ENCODE measurements at regions of chr1 and their contacts with region 1.

Region 1: DNA sequence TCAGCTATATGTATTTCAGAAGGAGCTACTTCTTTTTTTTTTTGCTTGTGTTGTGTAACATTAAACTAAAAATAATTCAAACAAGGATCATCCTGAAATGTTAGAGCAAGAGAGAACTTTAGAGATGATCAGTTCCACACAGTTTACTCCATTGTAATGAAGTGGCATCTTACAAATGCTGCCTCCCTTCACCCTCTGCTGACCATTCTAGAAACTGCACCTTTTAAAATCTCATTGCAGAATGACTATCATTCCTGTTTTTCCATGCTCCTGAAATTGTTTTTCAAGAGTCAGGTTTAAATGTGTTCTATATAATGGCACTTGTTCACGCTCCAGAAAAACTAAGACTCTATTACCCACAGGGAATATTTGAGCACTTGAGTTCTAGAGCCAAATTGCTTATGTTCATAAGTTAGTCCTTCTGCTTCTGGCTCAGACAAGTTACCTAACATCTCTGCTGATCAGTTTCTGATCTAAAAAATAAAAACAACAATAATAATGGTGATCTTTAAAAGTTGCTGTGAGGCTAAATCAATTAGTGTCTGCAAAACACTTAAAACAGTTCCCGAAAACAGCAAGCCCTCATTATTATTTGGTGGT is 21.5 kb upstream of the SLC44A5 start:
- DNase-seq: no peak
- ATAC-seq: peak; percentile 79
- H3K4me3 ChIP-seq: no peak overlapping the region
- H3K27ac ChIP-seq: no peak overlapping the region
- H3K4me1 ChIP-seq: no peaks in the 10 kb centered on the region
- H3K27me3 ChIP-seq: no peaks in the 10 kb centered on the region
- CTCF ChIP-seq: peak; percentile 65 to 69 (median 66); a peak in 5 of 6 replicates
- EP300 ChIP-seq: no peak
- POLR2A ChIP-seq: no peak
- RAD21 ChIP-seq: peak; percentile 86

Region 2: GRCh38 chr1:75233302-75233929 is 399.0 kb before region 1 on chr1:
- CTCF ChIA-PET with region 1: interaction called, 25 read pairs
- POLR2A ChIA-PET with region 1: no interaction called
- RAD21 ChIA-PET with region 1: interaction called, 6 read pairs
- SMC1A ChIA-PET with region 1: interaction called, 7 read pairs
- in situ Hi-C with region 1: loop called (anchors 10 kb)
- intact Hi-C with region 1: loop called (anchors 1 kb)
- DNase-seq: peak; percentile 4
- ATAC-seq: peak; percentile 93
- H3K4me3 ChIP-seq: no peak overlapping the region
- H3K27ac ChIP-seq: no peak overlapping the region
- H3K4me1 ChIP-seq: no peaks in the 10 kb centered on the region
- H3K27me3 ChIP-seq: no peaks in the 10 kb centered on the region
- CTCF ChIP-seq: peak; percentile 63 to 68 (median 64)
- EP300 ChIP-seq: no peak
- POLR2A ChIP-seq: no peak
- RAD21 ChIP-seq: peak; percentile 85

Region 3: GRCh38 chr1:75265792-75266191 is 366.7 kb before region 1 on chr1:
- CTCF ChIA-PET with region 1: interaction called, 71 read pairs
- POLR2A ChIA-PET with region 1: no interaction called
- RAD21 ChIA-PET with region 1: interaction called, 6 read pairs
- SMC1A ChIA-PET with region 1: interaction called, 14 read pairs
- in situ Hi-C with region 1: loop called (anchors 10 kb)
- intact Hi-C with region 1: loop called (anchors 1 kb)
- DNase-seq: peak; percentile 12
- ATAC-seq: peak; percentile 68
- H3K4me3 ChIP-seq: no peak overlapping the region
- H3K27ac ChIP-seq: no peak overlapping the region
- H3K4me1 ChIP-seq: no peaks in the 10 kb centered on the region
- H3K27me3 ChIP-seq: no peaks in the 10 kb centered on the region
- CTCF ChIP-seq: peak; percentile 56 to 65 (median 65)
- EP300 ChIP-seq: no peak
- POLR2A ChIP-seq: no peak
- RAD21 ChIP-seq: peak; percentile 75

Region 4: DNA sequence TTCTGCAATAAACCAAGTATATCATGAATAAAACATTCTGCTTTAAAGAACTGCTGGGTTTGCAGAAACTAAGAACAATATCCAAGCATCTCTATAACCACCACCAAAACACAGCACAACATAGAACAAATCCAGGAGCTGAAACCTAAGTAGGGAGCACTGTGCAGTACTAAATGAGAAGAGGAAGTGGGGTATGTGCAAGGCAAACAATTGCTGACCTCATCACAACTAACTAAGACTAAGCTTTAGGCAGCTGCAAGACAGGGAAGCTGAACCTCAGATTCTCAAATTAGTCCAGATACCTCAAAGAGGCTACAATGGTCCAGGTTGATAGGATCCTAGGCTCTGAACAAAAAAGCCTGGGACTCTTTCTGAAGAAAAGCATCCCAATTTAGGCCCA is 194.1 kb before region 1 on chr1:
- CTCF ChIA-PET with region 1: no interaction called
- POLR2A ChIA-PET with region 1: no interaction called
- RAD21 ChIA-PET with region 1: no interaction called
- SMC1A ChIA-PET with region 1: no interaction called
- in situ Hi-C with region 1: no loop called
- intact Hi-C with region 1: loop called (anchors 10 kb)
- DNase-seq: no peak
- ATAC-seq: peak; percentile 53; the same call in 1 of the 3 replicates
- H3K4me3 ChIP-seq: no peak overlapping the region
- H3K27ac ChIP-seq: no peak overlapping the region
- H3K4me1 ChIP-seq: no peaks in the 10 kb centered on the region
- H3K27me3 ChIP-seq: no peaks in the 10 kb centered on the region
- CTCF ChIP-seq: no peak
- EP300 ChIP-seq: no peak
- POLR2A ChIP-seq: no peak
- RAD21 ChIP-seq: no peak

Region 5: DNA sequence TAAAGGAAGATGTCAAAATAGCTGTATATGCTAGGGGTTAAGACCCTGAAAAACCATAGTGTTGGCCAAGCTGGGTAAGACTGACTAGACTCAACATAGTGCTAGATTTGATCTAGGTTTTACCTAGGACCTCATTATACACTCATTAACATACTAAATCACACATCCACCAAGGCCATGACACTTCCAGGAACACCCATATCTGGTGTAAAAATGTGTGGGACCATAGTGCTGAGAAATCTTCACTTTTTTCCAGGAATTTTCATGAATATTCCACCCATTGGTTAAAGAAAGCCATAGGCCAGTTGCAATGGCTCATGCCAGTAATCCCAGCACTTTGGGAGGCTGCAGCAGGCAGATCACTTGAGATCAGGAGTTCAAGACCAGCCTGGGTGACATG is 58.1 kb after region 1 on chr1:
- CTCF ChIA-PET with region 1: no interaction called
- POLR2A ChIA-PET with region 1: no interaction called
- RAD21 ChIA-PET with region 1: no interaction called
- SMC1A ChIA-PET with region 1: no interaction called
- in situ Hi-C with region 1: no loop called
- intact Hi-C with region 1: no loop called
- DNase-seq: no peak
- ATAC-seq: no peak
- H3K4me3 ChIP-seq: no peak overlapping the region
- H3K27ac ChIP-seq: no peak overlapping the region
- H3K4me1 ChIP-seq: no peaks in the 10 kb centered on the region
- H3K27me3 ChIP-seq: no peaks in the 10 kb centered on the region
- CTCF ChIP-seq: no peak
- EP300 ChIP-seq: no peak
- POLR2A ChIP-seq: no peak
- RAD21 ChIP-seq: no peak